Brain microvascular endothelial cell (primary cell): ENCODE measurements at regions of chr2 and their contacts with region 1.

Region 1: DNA sequence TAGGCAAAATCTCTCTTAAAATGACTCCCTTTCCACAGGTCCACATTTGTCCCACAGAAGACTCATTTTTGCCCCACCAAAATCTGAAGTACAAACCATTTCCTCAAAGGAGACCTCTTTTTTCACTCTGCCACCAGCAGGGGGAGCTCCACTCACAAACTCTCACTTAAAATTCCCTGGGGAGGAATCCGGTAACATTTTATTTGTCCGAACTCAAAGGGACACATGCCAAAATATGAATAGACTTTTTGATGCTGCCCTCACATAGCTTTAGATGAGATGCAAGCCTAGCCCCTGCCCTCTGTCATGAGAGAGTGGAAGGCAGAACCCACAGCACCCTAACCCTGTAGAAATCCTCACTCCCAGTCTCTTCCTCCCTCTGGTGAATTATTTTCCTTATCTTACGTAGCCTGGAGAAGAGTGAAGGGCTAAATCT is 57.1 kb downstream of the RMDN2 start:
- DNase-seq: peak; percentile 45
- H3K4me3 ChIP-seq: peak overlapping the region; percentile 33
- H3K27ac ChIP-seq: no peak overlapping the region
- H3K27me3 ChIP-seq: no peaks in the 10 kb centered on the region
- CTCF ChIP-seq: peak; percentile 89

Region 2: GRCh38 chr2:37523814-37524362 is 458.3 kb before region 1 on chr2:
- in situ Hi-C with region 1: no loop called
- DNase-seq: peak; percentile 25
- H3K4me3 ChIP-seq: no peak overlapping the region
- H3K27ac ChIP-seq: no peak overlapping the region
- H3K27me3 ChIP-seq: no peaks in the 10 kb centered on the region
- CTCF ChIP-seq: no peak

Region 3: GRCh38 chr2:37737507-37737906 is 244.7 kb before region 1 on chr2:
- in situ Hi-C with region 1: no loop called
- DNase-seq: no peak
- H3K4me3 ChIP-seq: no peak overlapping the region
- H3K27ac ChIP-seq: no peak overlapping the region
- H3K27me3 ChIP-seq: no peaks in the 10 kb centered on the region
- CTCF ChIP-seq: no peak

Region 4: GRCh38 chr2:38274286-38275276 is 292.4 kb after region 1 on chr2:
- in situ Hi-C with region 1: loop called (anchors 25 kb)
- DNase-seq: peak; percentile 80
- H3K4me3 ChIP-seq: no peak overlapping the region
- H3K27ac ChIP-seq: no peak overlapping the region
- H3K27me3 ChIP-seq: no peaks in the 10 kb centered on the region
- CTCF ChIP-seq: peak; percentile 48